ENCODE measurements at regions of chr4 and their contacts with region 1.

Region 1: DNA sequence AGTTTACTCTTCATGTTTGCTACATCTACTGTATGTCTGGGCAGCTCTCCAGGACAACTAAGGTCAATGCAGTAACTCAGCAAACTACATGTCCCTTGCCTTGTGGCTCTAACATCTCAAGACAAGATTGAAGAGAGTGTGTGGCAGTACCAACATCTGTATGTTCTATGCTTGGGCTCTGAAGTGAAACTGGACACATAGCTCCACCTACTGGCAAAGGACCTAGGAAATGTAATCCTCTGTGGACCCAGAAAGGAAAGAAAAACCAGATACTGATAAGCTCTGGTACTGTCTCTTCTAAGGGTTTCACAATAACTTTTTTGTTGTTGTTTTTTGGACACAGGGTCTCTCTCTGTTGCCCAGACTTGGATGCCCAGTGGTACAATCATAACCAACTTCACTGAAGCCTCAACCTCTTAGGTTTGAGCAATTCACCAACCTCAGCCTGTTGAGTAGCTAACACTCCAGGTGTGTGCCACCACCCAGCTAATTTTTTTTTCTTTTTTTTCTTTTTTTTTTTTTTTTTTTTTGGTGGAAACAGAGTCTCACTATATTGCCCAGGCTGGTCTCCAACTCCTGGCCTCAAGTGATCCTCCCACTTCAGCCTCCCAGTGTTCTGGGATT is 64.1 kb downstream of the QDPR start:
- DNase-seq: peak in 13 of 14 experiments; percentile 2 to 78 (median 36)
- ATAC-seq: peak; percentile 57
- H3K4me3 ChIP-seq: no peak overlapping the region
- H3K4me3 Mint-ChIP-seq: no peak overlapping the region
- H3K27ac ChIP-seq: no peak overlapping the region
- H3K27ac Mint-ChIP-seq: no peak overlapping the region
- H3K4me1 ChIP-seq: no peaks in the 10 kb centered on the region
- H3K4me1 Mint-ChIP-seq: no peaks in the 10 kb centered on the region
- H3K27me3 ChIP-seq: no peaks in the 10 kb centered on the region
- H3K27me3 Mint-ChIP-seq: no peaks in the 10 kb centered on the region
- CTCF ChIP-seq: peak; percentile 73

Region 2: GRCh38 chr4:16289897-16290554 is 1157.8 kb before region 1 on chr4:
- CTCF ChIA-PET with region 1: no interaction called
- POLR2A ChIA-PET with region 1: no interaction called
- intact Hi-C with region 1: loop called in 1 of 2 experiments (anchors 1 kb)
- DNase-seq: peak in 3 of 14 experiments; percentile 7 to 40 (median 33)
- ATAC-seq: no peak
- H3K4me3 ChIP-seq: no peak overlapping the region
- H3K4me3 Mint-ChIP-seq: no peak overlapping the region
- H3K27ac ChIP-seq: no peak overlapping the region
- H3K27ac Mint-ChIP-seq: no peak overlapping the region
- H3K4me1 ChIP-seq: no peaks in the 10 kb centered on the region
- H3K4me1 Mint-ChIP-seq: peaks cover 4% of the 10 kb centered on the region
- H3K27me3 ChIP-seq: peaks cover 0 to 9% of the 10 kb centered on the region in 2 experiments
- H3K27me3 Mint-ChIP-seq: peaks cover 25% of the 10 kb centered on the region
- CTCF ChIP-seq: peak; percentile 69

Region 3: GRCh38 chr4:16794816-16795445 is 652.9 kb before region 1 on chr4:
- CTCF ChIA-PET with region 1: interaction called, 3 read pairs
- POLR2A ChIA-PET with region 1: no interaction called
- intact Hi-C with region 1: loop called (anchors 2 to 5 kb)
- DNase-seq: peak in 9 of 14 experiments; percentile 0 to 35 (median 5)
- ATAC-seq: no peak
- H3K4me3 ChIP-seq: no peak overlapping the region
- H3K4me3 Mint-ChIP-seq: no peak overlapping the region
- H3K27ac ChIP-seq: no peak overlapping the region
- H3K27ac Mint-ChIP-seq: no peak overlapping the region
- H3K4me1 ChIP-seq: no peaks in the 10 kb centered on the region
- H3K4me1 Mint-ChIP-seq: no peaks in the 10 kb centered on the region
- H3K27me3 ChIP-seq: no peaks in the 10 kb centered on the region
- H3K27me3 Mint-ChIP-seq: no peaks in the 10 kb centered on the region
- CTCF ChIP-seq: peak; percentile 36

Region 4: GRCh38 chr4:16916719-16917337 is 531.0 kb before region 1 on chr4:
- CTCF ChIA-PET with region 1: interaction called, 6 read pairs
- POLR2A ChIA-PET with region 1: no interaction called
- intact Hi-C with region 1: loop called in 1 of 2 experiments (anchors 2 kb)
- DNase-seq: peak; percentile 39 to 78 (median 48)
- ATAC-seq: peak; percentile 90
- H3K4me3 ChIP-seq: no peak overlapping the region
- H3K4me3 Mint-ChIP-seq: no peak overlapping the region
- H3K27ac ChIP-seq: no peak overlapping the region
- H3K27ac Mint-ChIP-seq: no peak overlapping the region
- H3K4me1 ChIP-seq: no peaks in the 10 kb centered on the region
- H3K4me1 Mint-ChIP-seq: no peaks in the 10 kb centered on the region
- H3K27me3 ChIP-seq: no peaks in the 10 kb centered on the region
- H3K27me3 Mint-ChIP-seq: no peaks in the 10 kb centered on the region
- CTCF ChIP-seq: peak; percentile 75

Region 5: GRCh38 chr4:17284323-17285175 is 163.2 kb before region 1 on chr4:
- CTCF ChIA-PET with region 1: no interaction called
- POLR2A ChIA-PET with region 1: no interaction called
- intact Hi-C with region 1: loop called (anchors 1 to 5 kb)
- DNase-seq: no peak
- ATAC-seq: no peak
- H3K4me3 ChIP-seq: no peak overlapping the region
- H3K4me3 Mint-ChIP-seq: no peak overlapping the region
- H3K27ac ChIP-seq: no peak overlapping the region
- H3K27ac Mint-ChIP-seq: no peak overlapping the region
- H3K4me1 ChIP-seq: no peaks in the 10 kb centered on the region
- H3K4me1 Mint-ChIP-seq: no peaks in the 10 kb centered on the region
- H3K27me3 ChIP-seq: no peaks in the 10 kb centered on the region
- H3K27me3 Mint-ChIP-seq: no peaks in the 10 kb centered on the region
- CTCF ChIP-seq: no peak

Region 6: GRCh38 chr4:17347445-17347844 is 100.3 kb before region 1 on chr4:
- CTCF ChIA-PET with region 1: interaction called, 6 read pairs
- POLR2A ChIA-PET with region 1: no interaction called
- intact Hi-C with region 1: loop called (anchors 2 to 5 kb)
- DNase-seq: peak in 9 of 14 experiments; percentile 2 to 60 (median 13)
- ATAC-seq: no peak
- H3K4me3 ChIP-seq: no peak overlapping the region
- H3K4me3 Mint-ChIP-seq: no peak overlapping the region
- H3K27ac ChIP-seq: no peak overlapping the region
- H3K27ac Mint-ChIP-seq: no peak overlapping the region
- H3K4me1 ChIP-seq: no peaks in the 10 kb centered on the region
- H3K4me1 Mint-ChIP-seq: no peaks in the 10 kb centered on the region
- H3K27me3 ChIP-seq: no peaks in the 10 kb centered on the region
- H3K27me3 Mint-ChIP-seq: no peaks in the 10 kb centered on the region
- CTCF ChIP-seq: peak; percentile 52

Measured in CD4-positive, alpha-beta T cell (primary cell).